ENCODE measurements at regions of chr3 and their contacts with region 1.

Region 1: DNA sequence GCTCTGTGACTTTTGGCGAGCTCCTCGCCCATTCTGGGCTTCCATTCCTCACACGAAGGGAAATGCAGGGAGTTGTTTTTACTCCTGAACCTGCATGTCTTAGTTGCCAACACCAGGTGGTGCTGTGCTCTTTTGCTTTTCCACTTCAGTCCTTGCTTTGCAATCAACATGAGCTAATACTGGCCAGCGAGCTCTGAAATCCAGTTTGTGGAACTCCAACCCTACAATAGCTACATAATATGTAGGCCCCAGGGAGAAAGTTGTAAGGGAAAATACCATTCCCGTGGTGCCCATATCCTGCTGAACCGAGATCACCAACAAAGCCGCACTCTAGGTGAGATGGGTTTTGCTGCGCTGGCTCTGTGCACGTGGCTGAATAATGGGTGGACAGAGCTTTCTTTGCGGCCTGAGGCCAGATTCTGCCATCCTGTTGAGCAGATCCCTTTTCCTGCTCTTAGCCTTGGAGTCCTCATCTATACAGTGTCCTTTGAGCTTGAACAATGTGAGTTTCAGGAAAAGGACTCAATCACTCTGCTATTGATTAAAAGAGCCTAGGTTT is 25.0 kb downstream of the LSM3 start:
- DNase-seq: peak; percentile 58
- H3K4me3 ChIP-seq: no peak overlapping the region
- CTCF ChIP-seq: peak; percentile 77

Region 2: GRCh38 chr3:14178247-14179113 is 25.1 kb before region 1 on chr3 and contains the starts of genes LSM3 and XPC:
- CTCF ChIA-PET with region 1: interaction called, 41 read pairs
- POLR2A ChIA-PET with region 1: interaction called, 7 read pairs
- DNase-seq: peak; percentile 97
- H3K4me3 ChIP-seq: peak within 1 kb of the TSS; percentile 95
- CTCF ChIP-seq: no peak

Region 3: GRCh38 chr3:14234251-14235002 is 30.8 kb after region 1 on chr3:
- CTCF ChIA-PET with region 1: interaction called, 47 read pairs
- POLR2A ChIA-PET with region 1: no interaction called
- DNase-seq: no peak
- H3K4me3 ChIP-seq: no peak overlapping the region
- CTCF ChIP-seq: no peak

Region 4: GRCh38 chr3:14393440-14394111 is 190.0 kb after region 1 on chr3:
- CTCF ChIA-PET with region 1: interaction called, 13 read pairs
- POLR2A ChIA-PET with region 1: no interaction called
- DNase-seq: peak; percentile 67
- H3K4me3 ChIP-seq: no peak overlapping the region
- CTCF ChIP-seq: peak; percentile 38

Region 5: GRCh38 chr3:14461748-14462324 is 258.2 kb after region 1 on chr3:
- CTCF ChIA-PET with region 1: interaction called, 303 read pairs
- POLR2A ChIA-PET with region 1: no interaction called
- DNase-seq: no peak
- H3K4me3 ChIP-seq: no peak overlapping the region
- CTCF ChIP-seq: peak; percentile 91

Region 6: GRCh38 chr3:14548321-14548729 is 344.7 kb after region 1 on chr3:
- CTCF ChIA-PET with region 1: interaction called, 78 read pairs
- POLR2A ChIA-PET with region 1: no interaction called
- DNase-seq: no peak
- H3K4me3 ChIP-seq: no peak overlapping the region
- CTCF ChIP-seq: peak; percentile 86

Measured in AG04449 (cell line).